Ascending aorta (tissue), 2 donors: ENCODE measurements at regions of chr9 and their contacts with region 1.

Region 1: GRCh38 chr9:71911253-71912074 is at the start of gene C9orf85:
- DNase-seq: peak; percentile 97 to 99
- H3K4me3 ChIP-seq: peak within 1 kb of the TSS; percentile 70 to 96
- H3K27ac ChIP-seq: peak within 1 kb of the TSS; percentile 92 to 96
- H3K4me1 ChIP-seq: peaks cover 2 to 13% of the 10 kb centered on the region in 2 donors
- H3K27me3 ChIP-seq: no peaks in the 10 kb centered on the region
- CTCF ChIP-seq: no peak
- total RNA-seq, gene C9orf85: 2.6 TPM

Region 2: DNA sequence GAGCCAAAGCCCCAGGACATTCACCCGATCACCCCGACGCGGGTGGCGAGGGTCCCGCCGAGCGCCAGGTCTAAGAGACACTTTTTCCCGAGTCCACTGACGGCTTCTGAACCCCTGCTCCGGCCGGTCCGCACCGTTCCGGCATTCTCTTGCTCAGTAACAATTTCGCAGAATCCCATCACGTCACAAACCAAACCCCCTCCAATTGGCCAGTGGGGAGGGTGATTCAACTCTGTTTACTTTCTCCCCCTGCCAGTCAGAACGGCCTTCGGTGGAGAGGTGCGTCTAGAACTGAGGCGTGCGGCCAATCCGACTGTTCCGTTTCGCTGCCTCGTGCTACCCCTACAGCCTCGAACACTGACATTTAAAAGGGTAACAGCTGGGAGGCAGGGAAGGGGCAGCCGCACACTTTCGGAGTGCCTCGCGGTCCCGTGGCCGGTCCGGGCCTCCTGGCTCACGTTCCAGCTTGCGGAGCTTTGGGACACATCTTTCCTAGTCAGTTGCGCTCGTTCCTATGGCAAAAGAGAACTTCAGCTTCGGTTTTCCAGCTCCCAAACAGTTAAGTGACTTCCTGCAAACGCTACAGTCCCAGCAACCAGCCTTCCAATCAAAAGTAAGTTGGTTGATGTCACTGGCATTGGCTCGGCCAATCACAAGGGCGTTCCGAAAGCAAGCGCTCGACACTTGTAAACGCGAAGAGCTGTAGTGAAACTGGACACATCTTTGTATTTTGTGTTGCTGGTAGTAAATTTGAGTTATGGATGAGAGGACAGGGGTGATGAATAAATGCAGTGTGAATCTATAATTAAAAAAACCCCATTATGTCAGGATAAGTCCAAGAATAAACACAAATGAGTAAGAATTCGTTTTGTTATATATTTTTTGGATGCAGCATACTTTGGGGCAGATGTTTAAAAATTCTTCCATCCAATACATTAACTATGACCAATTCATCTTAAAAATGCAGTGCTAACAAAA is 1497.4 kb before region 1 on chr9 and contains the start of gene KLF9:
- intact Hi-C with region 1: loop called (anchors 5 kb)
- DNase-seq: peak; percentile 95 to 98
- H3K4me3 ChIP-seq: peak within 1 kb of the TSS; percentile 92 to 94
- H3K27ac ChIP-seq: peak within 1 kb of the TSS; percentile 100
- H3K4me1 ChIP-seq: peaks cover 5 to 37% of the 10 kb centered on the region in 2 donors
- H3K27me3 ChIP-seq: no peaks in the 10 kb centered on the region
- CTCF ChIP-seq: no peak
- total RNA-seq, gene KLF9: 98.7 TPM

Region 3: GRCh38 chr9:71703172-71703872 is 208.1 kb before region 1 on chr9:
- intact Hi-C with region 1: no loop called
- DNase-seq: no peak
- H3K4me3 ChIP-seq: no peak overlapping the region
- H3K27ac ChIP-seq: no peak overlapping the region
- H3K4me1 ChIP-seq: peaks cover 0 to 4% of the 10 kb centered on the region in 2 donors
- H3K27me3 ChIP-seq: no peaks in the 10 kb centered on the region
- CTCF ChIP-seq: no peak

Region 4: DNA sequence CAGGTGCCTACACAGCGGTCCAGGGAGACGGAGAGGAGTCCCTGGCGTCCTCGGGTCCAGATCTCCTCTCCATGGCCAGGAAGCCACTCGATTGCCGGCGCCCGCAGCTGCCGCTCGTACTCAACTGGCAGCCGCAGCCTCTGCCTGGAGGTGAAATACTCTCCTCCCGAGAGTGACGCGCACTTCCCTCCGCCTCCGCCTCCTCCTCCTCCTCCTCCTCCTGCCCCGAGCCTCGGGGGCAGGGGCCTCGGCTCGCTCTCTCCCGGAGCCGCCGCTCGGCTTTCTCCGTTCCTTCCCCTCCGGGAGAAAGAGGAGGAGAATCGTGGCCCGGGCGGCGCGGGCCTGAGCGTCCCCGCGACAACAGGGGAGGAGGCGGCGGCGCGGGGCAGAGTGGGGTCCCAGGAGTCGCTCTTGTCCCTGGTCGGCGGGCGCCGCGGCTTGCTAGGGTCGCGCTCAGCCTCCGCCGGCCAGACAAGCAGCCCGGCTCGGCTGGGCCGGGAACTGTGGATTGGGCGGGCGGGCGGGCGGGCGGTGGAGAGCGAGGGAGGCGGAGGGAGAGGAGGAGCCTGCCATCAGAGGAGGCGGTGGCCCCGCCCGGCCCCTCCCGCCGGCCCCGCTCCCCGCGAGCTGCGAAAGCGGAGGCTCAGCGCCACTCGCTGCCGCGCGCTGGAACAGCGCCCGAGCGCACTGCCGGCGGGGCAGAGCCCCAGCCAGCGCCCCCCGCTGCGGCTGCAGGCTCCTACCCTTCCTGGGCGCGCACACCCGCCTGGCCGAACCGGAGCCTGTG is 142.9 kb before region 1 on chr9 and contains the start of gene CEMIP2:
- intact Hi-C with region 1: loop called (anchors 2 kb)
- DNase-seq: peak; percentile 44 to 92
- H3K4me3 ChIP-seq: peak within 1 kb of the TSS; percentile 78 to 89
- H3K27ac ChIP-seq: peak within 1 kb of the TSS; percentile 96 to 99
- H3K4me1 ChIP-seq: peaks cover 0 to 21% of the 10 kb centered on the region in 2 donors
- H3K27me3 ChIP-seq: no peaks in the 10 kb centered on the region
- CTCF ChIP-seq: peak in 1 of 3 experiments; percentile 18
- total RNA-seq, gene CEMIP2: 34.4 TPM

Region 5: DNA sequence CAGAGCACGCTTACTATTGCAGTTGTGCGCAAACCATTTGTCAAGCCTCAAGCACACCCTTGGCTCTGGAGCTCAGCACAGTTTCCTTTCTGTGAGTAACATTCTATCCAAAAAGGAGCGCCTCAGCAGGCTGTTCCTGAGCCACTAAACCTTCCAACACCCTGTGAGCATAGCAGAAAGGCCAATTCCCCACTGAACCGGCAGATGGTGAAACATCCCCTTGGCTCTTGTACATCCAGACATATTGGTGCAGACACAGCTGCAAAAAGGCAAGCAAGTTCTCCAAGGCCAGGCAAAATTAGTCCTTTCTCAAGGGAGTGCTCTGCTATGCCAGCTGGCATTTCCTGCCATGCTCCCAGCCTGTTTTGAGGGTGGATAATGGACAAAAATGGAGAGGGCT is 99.1 kb before region 1 on chr9:
- intact Hi-C with region 1: loop called (anchors 2 kb)
- DNase-seq: peak in 1 of 2 donors; percentile 82
- H3K4me3 ChIP-seq: no peak overlapping the region
- H3K27ac ChIP-seq: peak overlapping the region; percentile 52 to 67
- H3K4me1 ChIP-seq: peaks cover 3 to 30% of the 10 kb centered on the region in 2 donors
- H3K27me3 ChIP-seq: no peaks in the 10 kb centered on the region
- CTCF ChIP-seq: peak; percentile 9 to 44 (median 40)

Region 6: DNA sequence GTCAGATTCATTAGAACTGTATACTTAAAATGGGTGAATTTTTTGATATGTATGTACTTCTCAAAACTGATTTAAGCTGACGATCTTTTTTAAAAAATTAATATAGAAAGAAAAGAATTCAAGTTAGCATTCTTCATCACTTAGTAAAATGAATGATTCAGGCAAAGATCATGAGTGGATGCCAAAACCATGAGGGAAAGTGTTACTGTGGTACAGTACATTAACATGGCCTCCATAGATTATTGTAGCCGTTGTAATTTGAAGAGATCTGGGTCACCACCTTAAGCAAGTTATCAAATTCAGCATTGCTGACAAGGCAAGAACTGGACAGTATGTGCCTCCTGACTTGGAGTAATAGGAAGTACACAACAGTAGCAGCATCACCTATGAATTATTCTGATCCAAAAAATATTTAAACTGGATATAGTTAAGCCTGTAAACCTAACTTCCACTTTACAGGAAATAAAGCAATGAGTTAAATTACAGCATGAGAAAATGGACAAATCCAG is 29.6 kb after region 1 on chr9:
- intact Hi-C with region 1: loop called (anchors 2 kb)
- DNase-seq: no peak
- H3K4me3 ChIP-seq: no peak overlapping the region
- H3K27ac ChIP-seq: no peak overlapping the region
- H3K4me1 ChIP-seq: peaks cover 2 to 19% of the 10 kb centered on the region in 2 donors
- H3K27me3 ChIP-seq: no peaks in the 10 kb centered on the region
- CTCF ChIP-seq: no peak

Region 7: GRCh38 chr9:72065076-72065475 is 153.6 kb after region 1 on chr9:
- intact Hi-C with region 1: no loop called
- DNase-seq: no peak
- H3K4me3 ChIP-seq: no peak overlapping the region
- H3K27ac ChIP-seq: no peak overlapping the region
- H3K4me1 ChIP-seq: no peaks in the 10 kb centered on the region
- H3K27me3 ChIP-seq: no peaks in the 10 kb centered on the region
- CTCF ChIP-seq: no peak